Cardiac septum (tissue), 1 donor: ENCODE measurements at regions of chr10 and their contacts with region 1.

Region 1: GRCh38 chr10:6920072-6921019 is 340.3 kb upstream of the PRKCQ start:
- DNase-seq: peak; percentile 87

Region 2: GRCh38 chr10:6507311-6507710 is 413.0 kb before region 1 on chr10:
- intact Hi-C with region 1: no loop called
- DNase-seq: no peak

Region 3: DNA sequence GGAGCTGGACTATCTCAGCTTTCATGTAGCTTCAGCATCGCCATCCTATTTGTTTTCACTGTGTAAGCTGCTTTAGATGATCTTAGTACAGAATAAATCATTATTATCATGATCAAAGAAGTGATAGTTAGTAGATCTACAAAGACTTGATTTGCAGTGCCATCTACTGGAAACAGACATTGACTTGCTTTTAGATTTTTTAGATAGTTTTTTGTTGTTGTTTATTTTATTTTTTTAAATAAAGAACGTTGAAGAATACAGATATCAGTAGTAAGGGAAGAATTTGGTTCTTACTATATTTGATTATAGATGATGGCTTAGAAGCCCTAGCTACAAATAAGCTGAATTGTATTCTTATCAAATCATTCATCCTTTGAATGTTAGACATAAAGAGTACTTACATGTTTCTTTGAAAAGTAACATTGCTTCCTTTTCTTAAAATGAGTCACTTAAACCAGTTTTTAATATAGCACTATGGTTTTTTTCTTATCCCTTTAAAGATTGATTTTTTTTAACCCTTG is 496.8 kb after region 1 on chr10:
- intact Hi-C with region 1: loop called (anchors 5 kb)
- DNase-seq: no peak